ENCODE measurements at regions of chr5 and their contacts with region 1.

Region 1: GRCh38 chr5:35852084-35852734 is 4.5 kb upstream of the IL7R start:
- DNase-seq: peak in 7 of 10 donors; percentile 28 to 64 (median 45)
- ATAC-seq: peak in 1 of 2 donors; percentile 1
- H3K4me3 Mint-ChIP-seq: peak overlapping the region; percentile 82 to 97 (median 90)
- H3K27ac Mint-ChIP-seq: peak overlapping the region; percentile 95 to 100 (median 100)
- H3K4me1 Mint-ChIP-seq: peaks cover 23 to 80% (median 72%) of the 10 kb centered on the region in 4 donors
- H3K27me3 Mint-ChIP-seq: no peaks in the 10 kb centered on the region

Region 2: DNA sequence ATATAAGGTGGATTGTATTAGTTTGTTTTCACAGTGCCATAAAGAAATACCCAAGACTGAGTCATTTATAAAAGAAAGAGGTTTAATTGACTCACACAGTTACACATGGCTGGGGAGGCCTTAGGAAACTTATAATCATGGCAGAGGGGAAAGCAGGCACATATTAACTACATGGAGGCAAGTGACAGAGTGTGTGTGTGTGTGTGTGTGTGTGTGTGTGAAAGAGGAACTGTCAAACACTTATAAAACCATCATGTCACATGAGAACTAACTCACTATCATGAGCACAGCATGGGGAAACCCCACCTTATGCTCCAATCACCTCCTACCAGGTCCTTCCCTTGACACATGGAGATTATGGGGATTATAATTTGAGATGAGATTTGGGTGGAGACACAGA is 115.9 kb before region 1 on chr5:
- POLR2A ChIA-PET with region 1: no interaction called
- DNase-seq: no peak
- ATAC-seq: no peak
- H3K4me3 Mint-ChIP-seq: no peak overlapping the region
- H3K27ac Mint-ChIP-seq: no peak overlapping the region
- H3K4me1 Mint-ChIP-seq: peaks cover 0 to 24% (median 9%) of the 10 kb centered on the region in 4 donors
- H3K27me3 Mint-ChIP-seq: no peaks in the 10 kb centered on the region

Region 3: DNA sequence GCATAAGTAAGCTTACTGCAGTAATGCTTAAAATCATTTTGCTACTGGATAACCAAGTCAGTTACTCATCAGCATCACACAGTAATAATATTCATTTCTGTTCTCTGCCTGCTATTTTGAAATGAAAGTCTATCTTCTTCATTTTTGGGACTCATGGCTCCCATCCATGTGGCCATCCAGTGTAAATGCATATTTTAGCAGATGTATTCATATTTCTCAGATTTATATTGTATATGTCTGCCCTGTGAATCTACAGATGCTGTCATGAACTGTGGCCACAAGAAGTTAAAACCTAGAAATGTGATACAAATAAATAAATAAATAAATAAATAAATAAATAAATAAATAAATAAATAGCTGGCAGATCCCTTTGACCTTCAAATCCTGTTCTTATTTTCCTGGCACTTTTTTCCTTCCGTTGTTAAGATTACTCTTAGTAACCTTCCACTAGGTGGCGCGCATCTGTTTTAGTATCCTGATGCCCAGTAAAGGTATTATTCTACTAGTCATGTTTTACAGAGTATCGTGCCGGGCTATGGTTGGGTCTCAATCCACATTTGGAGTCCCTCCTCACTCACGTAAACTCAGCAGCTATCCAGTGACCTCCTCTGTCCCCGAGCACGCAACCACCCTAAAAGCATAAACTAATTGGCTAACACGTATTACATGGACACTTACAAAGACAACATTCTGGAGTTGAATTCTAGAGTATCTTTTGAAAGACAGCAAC is 74.7 kb before region 1 on chr5:
- POLR2A ChIA-PET with region 1: interaction called, 431 read pairs
- DNase-seq: peak; percentile 53 to 83 (median 68)
- ATAC-seq: peak; percentile 54 to 60
- H3K4me3 Mint-ChIP-seq: peak overlapping the region; percentile 20 to 84 (median 72)
- H3K27ac Mint-ChIP-seq: peak overlapping the region; percentile 75 to 97 (median 92)
- H3K4me1 Mint-ChIP-seq: peaks cover 34 to 70% (median 61%) of the 10 kb centered on the region in 4 donors
- H3K27me3 Mint-ChIP-seq: no peaks in the 10 kb centered on the region

Region 4: DNA sequence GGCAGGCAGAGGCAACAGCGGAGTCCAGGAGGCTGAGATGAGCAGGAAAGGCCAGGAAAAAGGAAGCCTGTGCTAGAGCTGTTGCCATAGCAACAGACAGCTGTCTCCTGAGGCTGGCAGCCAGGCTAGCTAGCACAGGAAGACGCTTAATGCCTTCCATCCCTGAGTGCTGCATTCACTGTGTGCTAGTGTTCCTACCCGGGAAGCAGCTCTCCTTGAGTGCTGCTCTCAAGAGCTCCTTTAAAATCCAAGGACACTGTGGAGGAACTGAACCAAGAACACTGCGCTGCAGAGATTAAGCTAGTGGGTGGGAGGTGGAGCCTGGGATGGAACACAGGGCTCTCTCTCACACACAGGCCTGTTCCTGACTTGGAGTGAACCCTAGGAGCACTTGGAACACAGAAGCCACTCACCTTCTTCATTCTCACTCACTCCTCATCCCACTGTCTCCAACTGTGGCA is 49.0 kb before region 1 on chr5:
- POLR2A ChIA-PET with region 1: interaction called, 100 read pairs
- DNase-seq: peak in 4 of 10 donors; percentile 24 to 63 (median 38)
- ATAC-seq: peak; percentile 64 to 66
- H3K4me3 Mint-ChIP-seq: peak overlapping the region in 8 of 10 donors; percentile 12 to 77 (median 50)
- H3K27ac Mint-ChIP-seq: peak overlapping the region; percentile 73 to 94 (median 84)
- H3K4me1 Mint-ChIP-seq: peaks cover 38 to 66% (median 63%) of the 10 kb centered on the region in 4 donors
- H3K27me3 Mint-ChIP-seq: no peaks in the 10 kb centered on the region

Region 5: DNA sequence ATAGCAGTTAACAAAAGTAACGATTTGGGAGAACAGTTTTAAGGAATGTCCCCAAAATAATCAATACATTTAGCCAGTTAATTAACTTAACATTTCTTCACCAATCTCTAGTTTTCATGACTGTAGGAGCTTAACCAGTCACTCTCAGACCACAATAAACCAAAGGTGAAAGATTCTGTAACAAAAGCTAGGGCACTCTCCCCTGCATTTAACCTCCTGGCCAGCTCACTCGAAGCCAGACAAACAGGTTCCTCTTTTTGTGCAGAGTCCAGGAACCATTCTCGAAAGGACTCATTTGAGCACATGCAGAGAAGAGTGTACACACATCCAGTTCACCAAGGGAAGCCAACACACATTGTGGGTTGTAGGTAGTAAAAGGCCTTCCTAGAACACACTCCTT is 10.9 kb after region 1 on chr5:
- POLR2A ChIA-PET with region 1: interaction called, 250 read pairs
- DNase-seq: no peak
- ATAC-seq: peak in 1 of 2 donors; percentile 21
- H3K4me3 Mint-ChIP-seq: peak overlapping the region; percentile 84 to 97 (median 96)
- H3K27ac Mint-ChIP-seq: peak overlapping the region; percentile 89 to 99 (median 97)
- H3K4me1 Mint-ChIP-seq: peaks cover 48 to 82% (median 66%) of the 10 kb centered on the region in 4 donors
- H3K27me3 Mint-ChIP-seq: no peaks in the 10 kb centered on the region

Region 6: DNA sequence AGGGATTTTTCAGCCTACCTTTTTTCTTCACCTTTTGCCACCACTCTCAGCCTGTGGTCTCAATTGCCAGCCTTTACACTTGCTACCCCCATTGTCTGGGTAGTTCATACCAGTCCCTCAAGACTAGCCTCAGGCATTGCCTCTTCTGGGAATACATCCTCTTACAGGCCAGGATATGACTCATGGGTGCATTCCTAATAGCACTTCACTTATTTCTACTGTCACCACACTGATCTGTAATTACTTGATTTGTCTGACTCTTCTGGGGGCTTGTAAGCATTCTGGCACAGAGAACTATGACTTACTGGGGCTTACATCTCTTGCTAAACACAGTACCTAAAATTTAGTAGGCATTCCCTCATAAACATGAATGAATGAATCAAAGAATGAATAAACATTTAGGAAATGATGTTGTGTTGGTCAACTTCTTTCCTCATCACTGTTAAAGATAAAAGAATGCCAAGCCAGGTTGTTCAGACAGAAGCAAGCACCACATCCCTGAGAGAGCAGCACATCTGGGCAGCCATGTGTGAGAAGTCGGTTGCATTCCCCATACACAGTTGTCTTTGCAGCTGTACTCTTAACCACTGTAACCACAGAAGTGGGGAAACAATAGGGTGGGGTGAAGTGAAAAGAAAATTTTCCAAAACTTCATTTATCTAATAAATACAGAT is 32.0 kb after region 1 on chr5:
- POLR2A ChIA-PET with region 1: interaction called, 16 read pairs
- DNase-seq: no peak
- ATAC-seq: peak; percentile 43 to 54
- H3K4me3 Mint-ChIP-seq: peak overlapping the region in 7 of 10 donors; percentile 5 to 51 (median 21)
- H3K27ac Mint-ChIP-seq: peak overlapping the region; percentile 9 to 85 (median 58)
- H3K4me1 Mint-ChIP-seq: peaks cover 30 to 55% (median 53%) of the 10 kb centered on the region in 4 donors
- H3K27me3 Mint-ChIP-seq: no peaks in the 10 kb centered on the region

Region 7: GRCh38 chr5:35899800-35900199 is 47.6 kb after region 1 on chr5:
- POLR2A ChIA-PET with region 1: no interaction called
- DNase-seq: no peak
- ATAC-seq: peak in 1 of 2 donors; percentile 56
- H3K4me3 Mint-ChIP-seq: peak overlapping the region in 8 of 10 donors; percentile 25 to 73 (median 66)
- H3K27ac Mint-ChIP-seq: peak overlapping the region in 9 of 10 donors; percentile 39 to 88 (median 76)
- H3K4me1 Mint-ChIP-seq: peaks cover 27 to 56% (median 51%) of the 10 kb centered on the region in 4 donors
- H3K27me3 Mint-ChIP-seq: no peaks in the 10 kb centered on the region